PC-3 (cell line): ENCODE measurements at regions of chr3 and their contacts with region 1.

Region 1: DNA sequence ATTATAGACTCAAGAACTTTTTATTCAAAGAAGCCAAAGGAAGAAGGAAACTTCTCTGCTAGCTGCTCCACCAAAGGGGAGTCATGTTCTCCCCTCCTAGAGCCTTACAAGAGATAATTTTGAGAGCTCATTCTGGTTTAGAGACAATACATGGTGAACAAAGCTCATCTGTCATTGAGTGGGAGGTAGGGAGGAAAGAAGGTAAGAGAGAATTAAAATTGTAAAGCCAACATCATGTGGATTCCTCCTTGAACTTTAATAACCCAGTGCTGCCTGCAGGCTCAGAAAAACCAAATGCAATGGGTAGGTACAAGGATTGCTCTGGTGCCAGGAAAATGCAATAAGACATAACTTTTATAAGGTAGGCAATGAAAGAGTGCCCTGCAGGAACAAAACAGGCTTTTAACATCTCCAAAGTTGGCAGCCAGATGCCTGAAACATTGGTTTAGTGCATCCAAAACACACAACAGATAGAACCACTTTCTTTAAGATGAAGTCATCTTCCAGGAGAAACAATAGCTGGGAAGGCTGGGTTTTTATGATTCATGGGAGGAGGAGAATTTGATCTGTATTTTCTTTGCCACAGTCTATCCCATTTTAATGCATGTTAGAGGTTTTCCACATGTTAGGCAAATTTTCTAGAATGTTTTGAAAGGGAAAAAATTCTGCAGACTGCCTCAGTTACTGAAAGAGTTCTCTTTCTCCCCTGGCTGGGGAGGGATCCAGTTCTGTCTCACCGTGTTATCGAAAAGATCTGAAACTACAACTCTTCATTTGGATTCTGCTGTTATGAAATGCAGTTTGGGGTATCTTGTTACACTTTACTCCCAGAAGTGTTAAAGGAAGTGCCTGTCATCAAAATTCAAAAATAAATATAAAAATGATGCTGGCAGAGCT is 11.3 kb upstream of the ARHGEF3 start:
- DNase-seq: peak; percentile 84
- ATAC-seq: peak; percentile 78
- H3K4me3 ChIP-seq: peak overlapping the region; percentile 21; the same call in 1 of the 2 replicates
- H3K27ac ChIP-seq: peak overlapping the region; percentile 75
- H3K4me1 ChIP-seq: peaks cover 41% of the 10 kb centered on the region
- H3K27me3 ChIP-seq: no peaks in the 10 kb centered on the region
- CTCF ChIP-seq: no peak

Region 2: GRCh38 chr3:56783644-56784447 is 29.2 kb before region 1 on chr3:
- CTCF ChIA-PET with region 1: interaction called, 11 read pairs
- POLR2A ChIA-PET with region 1: no interaction called
- intact Hi-C with region 1: loop called (anchors 2 kb)
- DNase-seq: peak; percentile 97
- ATAC-seq: peak; percentile 95
- H3K4me3 ChIP-seq: no peak overlapping the region
- H3K27ac ChIP-seq: peak overlapping the region; percentile 35
- H3K4me1 ChIP-seq: peaks cover 23% of the 10 kb centered on the region
- H3K27me3 ChIP-seq: no peaks in the 10 kb centered on the region
- CTCF ChIP-seq: no peak

Region 3: DNA sequence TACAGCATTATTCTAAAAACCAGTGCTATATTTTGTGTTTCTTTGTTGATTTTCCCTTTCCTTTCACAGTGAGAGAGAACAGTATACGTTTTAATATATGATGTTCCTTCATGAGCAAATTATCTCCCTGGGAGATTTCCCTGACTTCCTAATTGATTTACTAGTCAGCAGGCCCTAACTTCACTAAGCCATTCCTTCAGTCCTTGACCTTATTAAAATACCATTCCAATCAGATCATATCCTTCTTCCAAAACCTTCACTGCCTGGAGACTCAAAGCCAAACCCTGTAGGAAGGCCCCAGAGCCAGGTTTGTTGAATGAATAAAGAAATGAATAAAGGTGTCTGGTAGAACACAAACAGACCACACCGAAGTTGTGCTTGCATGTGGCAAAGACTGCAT is 32.5 kb after region 1 on chr3:
- CTCF ChIA-PET with region 1: no interaction called
- POLR2A ChIA-PET with region 1: no interaction called
- intact Hi-C with region 1: loop called (anchors 2 kb)
- DNase-seq: peak; percentile 53
- ATAC-seq: peak; percentile 93
- H3K4me3 ChIP-seq: no peak overlapping the region
- H3K27ac ChIP-seq: no peak overlapping the region
- H3K4me1 ChIP-seq: peaks cover 13% of the 10 kb centered on the region; the same call in 1 of the 2 replicates
- H3K27me3 ChIP-seq: no peaks in the 10 kb centered on the region
- CTCF ChIP-seq: no peak

Region 4: GRCh38 chr3:56923521-56924224 is 110.7 kb after region 1 on chr3:
- CTCF ChIA-PET with region 1: no interaction called
- POLR2A ChIA-PET with region 1: no interaction called
- intact Hi-C with region 1: loop called (anchors 5 kb)
- DNase-seq: peak; percentile 80
- ATAC-seq: peak; percentile 94
- H3K4me3 ChIP-seq: no peak overlapping the region
- H3K27ac ChIP-seq: peak overlapping the region; percentile 66
- H3K4me1 ChIP-seq: peaks cover 22% of the 10 kb centered on the region
- H3K27me3 ChIP-seq: no peaks in the 10 kb centered on the region
- CTCF ChIP-seq: no peak

Region 5: GRCh38 chr3:57006179-57006638 is 193.2 kb after region 1 on chr3:
- CTCF ChIA-PET with region 1: no interaction called
- POLR2A ChIA-PET with region 1: no interaction called
- intact Hi-C with region 1: no loop called
- DNase-seq: peak; percentile 26
- ATAC-seq: no peak
- H3K4me3 ChIP-seq: no peak overlapping the region; the same call in 1 of the 2 replicates
- H3K27ac ChIP-seq: peak overlapping the region; percentile 90
- H3K4me1 ChIP-seq: peaks cover 30% of the 10 kb centered on the region
- H3K27me3 ChIP-seq: no peaks in the 10 kb centered on the region
- CTCF ChIP-seq: no peak

Region 6: DNA sequence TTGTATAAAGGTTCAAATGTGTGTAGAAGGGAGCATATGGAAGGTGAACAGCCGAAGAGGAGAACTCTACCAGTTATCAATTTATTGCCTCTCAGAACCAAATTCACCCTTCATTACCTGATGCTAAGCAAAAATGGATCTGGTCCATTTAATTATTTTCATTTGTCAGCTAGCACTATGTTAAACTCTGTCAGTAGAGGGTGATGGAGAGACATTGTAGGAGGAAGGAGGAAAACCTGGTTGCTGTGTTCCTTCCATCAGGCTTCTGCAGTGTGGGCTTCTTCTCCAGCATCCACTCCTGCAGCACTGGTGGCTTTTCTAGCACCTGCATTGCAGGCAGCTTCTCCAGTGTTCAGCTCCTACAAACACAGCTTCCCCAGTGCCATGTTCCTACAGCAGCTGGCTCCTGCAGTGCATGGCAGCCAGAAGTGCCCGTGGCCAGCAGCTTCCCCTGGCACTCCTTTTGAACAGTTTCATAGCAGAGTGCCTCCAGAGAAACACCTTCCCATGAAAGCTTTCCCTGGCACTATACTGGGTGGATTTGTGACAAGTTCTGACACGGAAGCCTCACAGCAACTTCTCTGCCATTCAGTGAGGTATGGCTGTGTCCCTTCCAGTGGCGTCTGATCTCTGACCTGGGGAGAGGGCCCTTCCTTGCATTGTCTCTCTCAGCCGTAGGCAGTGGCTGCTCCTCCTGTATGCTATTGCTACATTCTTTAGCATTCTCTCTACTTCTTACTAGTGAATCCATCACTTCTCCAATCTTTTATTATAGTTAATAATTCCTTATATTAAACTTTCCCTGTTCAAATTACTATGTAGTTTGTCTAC is 366.8 kb after region 1 on chr3:
- CTCF ChIA-PET with region 1: interaction called, 13 read pairs
- POLR2A ChIA-PET with region 1: no interaction called
- intact Hi-C with region 1: no loop called
- DNase-seq: peak; percentile 59
- ATAC-seq: peak; percentile 93
- H3K4me3 ChIP-seq: no peak overlapping the region
- H3K27ac ChIP-seq: no peak overlapping the region
- H3K4me1 ChIP-seq: no peaks in the 10 kb centered on the region
- H3K27me3 ChIP-seq: no peaks in the 10 kb centered on the region
- CTCF ChIP-seq: peak; percentile 67

Region 7: GRCh38 chr3:57298041-57298440 is 485.0 kb after region 1 on chr3:
- CTCF ChIA-PET with region 1: no interaction called
- POLR2A ChIA-PET with region 1: no interaction called
- intact Hi-C with region 1: no loop called
- DNase-seq: peak; percentile 88
- ATAC-seq: peak; percentile 100
- H3K4me3 ChIP-seq: no peak overlapping the region
- H3K27ac ChIP-seq: no peak overlapping the region
- H3K4me1 ChIP-seq: peaks cover 11% of the 10 kb centered on the region
- H3K27me3 ChIP-seq: no peaks in the 10 kb centered on the region
- CTCF ChIP-seq: peak; percentile 34; the same call in 1 of the 2 replicates